ENCODE measurements at regions of chr11 and their contacts with region 1.

Region 1: DNA sequence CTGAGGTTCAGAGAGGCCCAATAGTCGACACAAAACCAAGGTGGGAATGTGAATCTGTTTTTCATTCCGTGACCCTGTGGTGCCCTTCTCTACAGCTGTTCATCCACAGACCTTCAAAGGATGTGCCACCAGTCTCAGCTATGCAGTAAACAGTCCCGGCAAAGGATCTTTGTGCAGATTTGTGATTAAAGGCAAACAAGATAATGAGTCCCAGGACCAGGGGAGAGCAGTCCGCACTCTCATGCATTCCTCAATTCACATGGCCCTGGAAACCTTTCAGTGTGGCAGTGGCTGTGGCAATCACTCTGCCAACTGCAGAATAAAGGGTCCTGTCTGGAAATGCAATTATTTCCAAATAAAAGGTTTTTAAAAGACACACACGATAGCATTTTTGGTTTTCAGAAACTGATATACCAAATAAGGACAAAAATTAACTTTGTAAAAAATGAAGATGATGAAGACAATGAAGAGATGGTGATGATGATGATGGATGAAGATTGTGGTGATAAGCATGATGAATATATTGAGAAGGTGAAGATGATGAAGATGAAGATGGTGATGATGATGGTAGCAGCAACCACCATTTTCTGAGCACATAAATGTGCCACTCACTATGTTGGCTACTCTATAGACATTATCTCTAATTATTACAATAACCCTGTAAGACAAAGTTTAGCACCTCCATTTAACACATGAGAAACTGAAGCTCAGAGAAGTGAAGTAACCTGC is 418.4 kb downstream of the TENM4 start:
- DNase-seq: no peak
- ATAC-seq: no peak
- H3K4me3 ChIP-seq: no peak overlapping the region
- H3K27ac ChIP-seq: no peak overlapping the region
- H3K4me1 ChIP-seq: no peaks in the 10 kb centered on the region
- H3K27me3 ChIP-seq: peaks cover 0 to 4% (median 0%) of the 10 kb centered on the region in 3 donors
- CTCF ChIP-seq: no peak

Region 2: DNA sequence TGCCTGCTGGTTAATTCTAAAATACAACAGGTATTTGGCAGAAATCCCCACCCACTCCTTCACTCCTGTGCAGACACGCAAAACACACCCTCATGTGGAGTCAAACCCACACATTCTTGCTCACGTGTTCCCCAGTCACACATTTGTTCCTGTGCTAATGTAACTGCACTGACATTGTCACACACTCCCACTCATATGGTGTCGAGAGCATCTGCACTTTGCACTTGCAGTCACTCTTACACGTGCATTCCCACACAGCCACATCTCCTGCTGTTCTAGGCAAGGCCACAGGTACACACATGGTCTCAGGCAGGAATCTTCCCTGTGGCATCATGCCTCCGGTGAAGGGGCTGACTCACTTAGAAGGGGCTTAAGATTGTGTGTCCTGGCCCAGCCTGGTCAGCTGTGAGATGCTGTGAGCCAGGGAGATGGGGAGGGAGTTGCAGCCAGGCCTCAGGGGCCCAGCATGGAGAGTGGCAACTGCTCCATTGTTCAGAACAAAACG is 23.4 kb after region 1 on chr11:
- intact Hi-C with region 1: loop called in 1 of 2 experiments (anchors 1 kb)
- DNase-seq: no peak
- ATAC-seq: no peak
- H3K4me3 ChIP-seq: no peak overlapping the region
- H3K27ac ChIP-seq: no peak overlapping the region
- H3K4me1 ChIP-seq: no peaks in the 10 kb centered on the region
- H3K27me3 ChIP-seq: no peaks in the 10 kb centered on the region
- CTCF ChIP-seq: no peak

Measured in psoas muscle (tissue), 8 donors.